ENCODE measurements at regions of chr11 and their contacts with region 1.

Region 1: DNA sequence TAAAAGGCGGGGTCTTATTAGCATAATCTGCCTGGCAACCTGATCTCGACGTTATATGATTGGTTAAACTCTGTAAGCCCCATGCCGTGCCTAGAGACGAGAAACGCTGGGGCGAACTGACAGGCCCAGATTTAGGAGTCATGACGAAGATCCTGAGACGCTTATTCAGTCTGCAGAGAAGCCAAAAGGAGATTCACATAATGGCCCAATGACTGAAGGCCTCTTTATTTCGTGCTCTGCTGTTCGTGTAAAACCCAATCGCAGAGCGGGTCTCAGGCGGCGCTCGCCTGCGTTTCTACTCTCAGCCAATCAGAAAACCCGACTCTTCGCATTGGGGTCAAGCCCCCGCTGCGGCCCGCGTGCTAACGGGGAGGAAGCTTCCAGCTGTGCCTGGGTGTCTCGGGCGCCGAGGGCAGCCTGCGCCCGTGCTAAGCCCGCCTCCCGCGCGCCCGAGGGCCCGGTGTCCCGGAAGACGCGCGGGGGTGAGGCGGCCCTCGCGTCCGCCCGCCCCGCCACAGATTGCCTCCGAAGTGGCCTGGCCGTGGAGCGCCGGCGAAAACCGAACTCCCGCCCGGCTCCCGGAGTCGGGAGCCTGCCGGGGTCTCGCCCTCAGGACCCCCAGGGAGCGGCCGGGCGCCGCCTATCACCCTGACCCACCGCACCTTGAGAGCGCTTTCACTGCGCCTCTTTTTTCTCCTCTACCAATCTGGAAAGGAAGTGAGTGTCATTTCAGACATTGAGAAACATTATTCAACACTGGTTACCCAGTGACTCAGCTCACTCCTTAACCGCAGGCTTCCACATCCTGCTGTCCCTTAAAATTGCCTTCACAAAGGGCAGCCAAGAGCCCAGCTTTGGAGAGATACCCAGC is 446 bp upstream of the PRDM10 start:
- DNase-seq: peak; percentile 93
- H3K4me3 ChIP-seq: peak overlapping the region; percentile 71 to 74
- H3K27ac ChIP-seq: peak overlapping the region; percentile 99
- H3K4me1 ChIP-seq: peaks cover 5% of the 10 kb centered on the region
- H3K27me3 ChIP-seq: no peaks in the 10 kb centered on the region
- CTCF ChIP-seq: peak in 1 of 4 experiments; percentile 21
- POLR2A ChIP-seq: peak; percentile 70

Region 2: GRCh38 chr11:129930296-129930695 is 72.8 kb before region 1 on chr11:
- intact Hi-C with region 1: loop called (anchors 5 kb)
- DNase-seq: no peak
- H3K4me3 ChIP-seq: no peak overlapping the region
- H3K27ac ChIP-seq: no peak overlapping the region
- H3K4me1 ChIP-seq: no peaks in the 10 kb centered on the region
- H3K27me3 ChIP-seq: no peaks in the 10 kb centered on the region
- CTCF ChIP-seq: no peak
- POLR2A ChIP-seq: no peak

Region 3: GRCh38 chr11:130069684-130070108 is 66.6 kb after region 1 on chr11 and contains the start of gene APLP2:
- intact Hi-C with region 1: loop called (anchors 2 kb)
- DNase-seq: peak; percentile 99
- H3K4me3 ChIP-seq: peak within 1 kb of the TSS; percentile 82 to 97
- H3K27ac ChIP-seq: peak within 1 kb of the TSS; percentile 90 to 96
- H3K4me1 ChIP-seq: no peaks in the 10 kb centered on the region
- H3K27me3 ChIP-seq: no peaks in the 10 kb centered on the region
- CTCF ChIP-seq: no peak
- POLR2A ChIP-seq: peak; percentile 94
- total RNA-seq, gene APLP2: 222 to 434 TPM

Region 4: GRCh38 chr11:130103296-130103814 is 100.3 kb after region 1 on chr11:
- intact Hi-C with region 1: no loop called
- DNase-seq: no peak
- H3K4me3 ChIP-seq: no peak overlapping the region
- H3K27ac ChIP-seq: peak overlapping the region; percentile 13 to 60
- H3K4me1 ChIP-seq: peaks cover 11% of the 10 kb centered on the region
- H3K27me3 ChIP-seq: no peaks in the 10 kb centered on the region
- CTCF ChIP-seq: no peak
- POLR2A ChIP-seq: no peak

Region 5: DNA sequence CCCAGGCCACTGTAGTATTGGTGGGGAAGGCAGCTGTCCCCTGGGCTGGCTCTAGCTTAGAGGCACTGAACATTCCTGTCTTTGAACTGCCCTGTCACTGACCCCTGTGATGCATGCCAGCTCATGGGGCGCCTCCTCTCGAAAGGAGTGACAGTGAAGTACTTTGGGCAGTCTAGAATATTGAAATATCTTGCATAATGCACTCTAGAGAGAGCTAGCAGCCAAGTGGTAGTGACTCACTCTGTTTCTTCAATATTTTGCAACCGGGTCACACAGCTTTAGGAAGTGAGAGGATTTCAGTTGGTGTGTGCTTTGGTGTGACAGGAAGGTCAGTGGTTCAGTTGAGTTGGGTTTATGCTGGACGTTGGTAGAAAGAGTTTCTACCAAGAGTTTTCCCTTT is 121.0 kb after region 1 on chr11:
- intact Hi-C with region 1: loop called (anchors 5 kb)
- DNase-seq: no peak
- H3K4me3 ChIP-seq: no peak overlapping the region
- H3K27ac ChIP-seq: no peak overlapping the region
- H3K4me1 ChIP-seq: no peaks in the 10 kb centered on the region
- H3K27me3 ChIP-seq: no peaks in the 10 kb centered on the region
- CTCF ChIP-seq: no peak
- POLR2A ChIP-seq: no peak

Region 6: GRCh38 chr11:130916238-130916855 is 913.3 kb after region 1 on chr11 and contains the start of gene SNX19:
- intact Hi-C with region 1: loop called (anchors 5 kb)
- DNase-seq: peak; percentile 88
- H3K4me3 ChIP-seq: peak within 1 kb of the TSS; percentile 55 to 81
- H3K27ac ChIP-seq: peak within 1 kb of the TSS; percentile 52 to 72
- H3K4me1 ChIP-seq: no peaks in the 10 kb centered on the region
- H3K27me3 ChIP-seq: no peaks in the 10 kb centered on the region
- CTCF ChIP-seq: peak; percentile 76 to 99 (median 94)
- POLR2A ChIP-seq: peak; percentile 47
- total RNA-seq, gene SNX19: 87.7 to 115 TPM